Endothelial cell of umbilical vein (primary cell): ENCODE measurements at regions of chr15 and their contacts with region 1.

Region 1: DNA sequence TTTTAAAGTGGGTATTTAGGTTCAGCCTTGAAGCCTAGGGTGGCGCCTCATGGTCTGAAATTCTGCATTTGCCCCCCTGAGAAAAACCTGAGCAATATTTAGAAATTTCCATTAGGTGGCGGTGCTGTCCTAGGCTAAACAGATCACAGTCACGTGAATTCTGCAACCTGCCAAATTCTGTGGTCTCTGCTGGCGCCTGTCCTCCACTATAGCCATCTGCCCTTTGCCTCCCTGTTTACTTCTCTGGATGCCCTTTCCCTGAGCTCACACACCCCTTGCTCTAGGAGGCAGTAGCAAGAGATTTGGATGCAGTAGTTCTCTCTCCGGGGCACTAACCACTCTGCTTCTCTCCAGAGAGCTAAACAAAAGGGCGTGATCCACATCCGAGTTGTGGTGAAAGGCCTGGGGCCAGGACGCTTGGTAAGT is 9.1 kb downstream of the MRPS11 start:
- DNase-seq: peak; percentile 41
- H3K4me3 ChIP-seq: no peak overlapping the region
- H3K27ac ChIP-seq: no peak overlapping the region
- H3K4me1 ChIP-seq: no peaks in the 10 kb centered on the region
- H3K27me3 ChIP-seq: no peaks in the 10 kb centered on the region
- CTCF ChIP-seq: peak; percentile 33 to 38
- POLR2A ChIP-seq: no peak

Region 2: GRCh38 chr15:88610701-88611231 is 134.1 kb after region 1 on chr15:
- CTCF ChIA-PET with region 1: interaction called, 11 read pairs
- POLR2A ChIA-PET with region 1: no interaction called
- dilution Hi-C with region 1: no loop called
- intact Hi-C with region 1: loop called (anchors 1 kb)
- DNase-seq: no peak
- H3K4me3 ChIP-seq: no peak overlapping the region
- H3K27ac ChIP-seq: no peak overlapping the region
- H3K4me1 ChIP-seq: peaks cover 4% of the 10 kb centered on the region
- H3K27me3 ChIP-seq: peaks cover 27 to 33% of the 10 kb centered on the region in 2 experiments
- CTCF ChIP-seq: no peak
- POLR2A ChIP-seq: no peak

Region 3: DNA sequence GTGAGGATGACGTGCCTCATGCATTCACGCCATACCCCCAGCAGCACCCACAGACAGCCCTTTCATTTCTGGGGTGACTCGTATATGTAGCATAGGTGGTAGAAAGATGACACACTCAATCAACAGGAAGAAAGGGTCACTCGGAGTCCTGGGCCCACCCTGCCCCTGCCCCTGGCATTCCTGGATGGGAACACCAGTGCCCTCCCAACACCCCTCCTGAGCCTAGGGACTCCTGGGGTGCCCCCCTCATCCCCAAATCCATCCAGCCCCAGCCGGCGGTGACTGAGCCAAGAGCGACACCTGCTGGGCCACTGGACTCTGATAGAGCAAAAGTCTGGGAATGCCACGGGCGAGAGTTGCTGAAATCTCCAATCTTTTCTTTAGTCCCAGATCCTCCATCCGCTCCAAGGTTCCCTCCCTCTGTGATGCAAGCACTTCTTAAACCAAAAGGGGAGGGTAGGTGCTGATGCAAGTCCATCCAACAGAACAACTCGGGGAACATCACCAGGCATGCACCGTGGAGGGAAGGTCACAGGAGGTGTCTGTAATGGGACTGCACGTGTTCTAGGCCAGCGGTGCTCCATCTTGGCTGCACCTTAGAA is 357.7 kb after region 1 on chr15:
- CTCF ChIA-PET with region 1: interaction called, 15 read pairs
- POLR2A ChIA-PET with region 1: no interaction called
- dilution Hi-C with region 1: no loop called
- intact Hi-C with region 1: loop called (anchors 1 kb)
- DNase-seq: peak; percentile 20
- H3K4me3 ChIP-seq: no peak overlapping the region
- H3K27ac ChIP-seq: no peak overlapping the region
- H3K4me1 ChIP-seq: no peaks in the 10 kb centered on the region
- H3K27me3 ChIP-seq: no peaks in the 10 kb centered on the region
- CTCF ChIP-seq: peak; percentile 53 to 65
- POLR2A ChIP-seq: no peak